Psoas muscle (tissue), 8 donors: ENCODE measurements at regions of chr12 and their contacts with region 1.

Region 1: GRCh38 chr12:48165094-48165981 is 8.0 kb upstream of the ASB8 start:
- DNase-seq: no peak
- ATAC-seq: peak; percentile 55 to 66 (median 58)
- H3K4me3 ChIP-seq: peak overlapping the region; percentile 8
- H3K27ac ChIP-seq: peak overlapping the region; percentile 88
- H3K4me1 ChIP-seq: peaks cover 31% of the 10 kb centered on the region
- H3K27me3 ChIP-seq: no peaks in the 10 kb centered on the region
- CTCF ChIP-seq: peak; percentile 94

Region 2: DNA sequence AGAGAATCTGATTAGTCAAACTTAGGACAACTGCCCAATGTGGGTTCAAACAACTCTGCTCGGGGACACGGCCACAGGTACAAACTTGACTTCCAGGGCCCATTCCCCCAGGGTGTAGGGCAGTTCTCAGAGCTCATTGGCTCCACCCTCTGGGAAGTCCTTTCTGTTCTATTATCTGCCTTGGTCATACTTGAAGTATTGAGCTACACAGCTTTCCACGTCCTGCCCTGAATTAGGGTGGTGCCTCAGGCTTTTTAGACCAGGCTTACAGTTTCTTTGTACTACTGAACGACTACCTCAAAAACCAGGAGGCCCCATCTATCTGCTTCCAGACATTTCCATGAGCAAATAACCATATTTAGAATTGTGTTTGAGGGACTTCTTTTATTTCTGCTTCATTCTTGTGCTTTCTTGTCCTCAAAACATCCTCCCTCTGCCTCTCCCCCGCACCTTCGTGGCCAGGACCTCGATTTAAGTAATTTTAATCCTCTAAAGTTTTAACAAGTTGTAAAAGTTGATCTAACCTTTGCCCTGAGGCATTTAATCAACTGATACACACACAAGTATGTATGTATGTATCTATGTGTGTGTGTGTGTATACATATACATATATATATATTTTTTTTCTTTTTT is 803.8 kb before region 1 on chr12:
- intact Hi-C with region 1: no loop called
- DNase-seq: no peak
- ATAC-seq: no peak
- H3K4me3 ChIP-seq: no peak overlapping the region
- H3K27ac ChIP-seq: peak overlapping the region; percentile 31
- H3K4me1 ChIP-seq: no peaks in the 10 kb centered on the region
- H3K27me3 ChIP-seq: no peaks in the 10 kb centered on the region
- CTCF ChIP-seq: no peak

Region 3: DNA sequence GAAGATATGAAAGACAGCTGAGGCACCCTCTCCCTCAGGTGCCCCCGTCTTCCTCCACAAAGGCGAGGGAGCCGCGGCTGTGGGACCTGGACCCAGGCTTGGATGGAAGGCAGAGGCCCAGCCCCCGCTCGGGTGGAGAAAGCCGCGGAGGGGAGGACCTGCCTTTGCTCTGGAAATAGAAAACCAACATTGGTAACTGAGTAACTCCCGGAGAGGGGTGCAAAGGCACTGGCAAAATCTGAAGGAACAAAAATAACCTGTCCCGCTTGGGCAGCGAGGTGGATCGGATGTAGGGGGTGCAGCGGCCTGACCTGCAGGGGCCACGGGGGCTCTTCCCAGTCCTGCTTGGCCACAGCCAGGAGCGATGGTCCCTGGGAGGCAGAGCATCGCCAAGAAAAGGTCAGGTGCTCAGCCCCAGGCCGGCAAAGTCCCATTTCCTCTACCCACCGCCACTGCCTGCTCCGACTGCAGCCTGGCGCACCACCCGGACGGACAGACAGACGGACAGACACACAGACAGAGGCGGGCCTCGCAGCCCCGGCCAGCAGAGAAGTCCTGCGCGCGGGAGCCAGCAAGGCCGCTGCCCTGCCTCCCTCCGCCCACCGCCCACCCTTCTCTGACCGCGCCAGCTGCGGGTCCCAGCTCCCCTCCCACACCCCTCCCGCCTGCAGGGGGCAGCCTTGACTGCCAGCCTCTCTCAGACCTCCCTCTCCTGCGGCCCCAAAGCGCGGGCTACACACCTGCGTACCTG is 223.3 kb before region 1 on chr12:
- intact Hi-C with region 1: loop called in 1 of 2 experiments (anchors 5 kb)
- DNase-seq: peak in 1 of 2 donors; percentile 58
- ATAC-seq: peak in 3 of 4 donors; percentile 44 to 59 (median 53)
- H3K4me3 ChIP-seq: no peak overlapping the region
- H3K27ac ChIP-seq: no peak overlapping the region
- H3K4me1 ChIP-seq: no peaks in the 10 kb centered on the region
- H3K27me3 ChIP-seq: peaks cover 0 to 16% (median 4%) of the 10 kb centered on the region in 3 donors
- CTCF ChIP-seq: no peak

Region 4: GRCh38 chr12:47954058-47954457 is 211.3 kb before region 1 on chr12:
- intact Hi-C with region 1: no loop called
- DNase-seq: no peak
- ATAC-seq: no peak
- H3K4me3 ChIP-seq: no peak overlapping the region
- H3K27ac ChIP-seq: no peak overlapping the region
- H3K4me1 ChIP-seq: no peaks in the 10 kb centered on the region
- H3K27me3 ChIP-seq: no peaks in the 10 kb centered on the region
- CTCF ChIP-seq: no peak

Region 5: DNA sequence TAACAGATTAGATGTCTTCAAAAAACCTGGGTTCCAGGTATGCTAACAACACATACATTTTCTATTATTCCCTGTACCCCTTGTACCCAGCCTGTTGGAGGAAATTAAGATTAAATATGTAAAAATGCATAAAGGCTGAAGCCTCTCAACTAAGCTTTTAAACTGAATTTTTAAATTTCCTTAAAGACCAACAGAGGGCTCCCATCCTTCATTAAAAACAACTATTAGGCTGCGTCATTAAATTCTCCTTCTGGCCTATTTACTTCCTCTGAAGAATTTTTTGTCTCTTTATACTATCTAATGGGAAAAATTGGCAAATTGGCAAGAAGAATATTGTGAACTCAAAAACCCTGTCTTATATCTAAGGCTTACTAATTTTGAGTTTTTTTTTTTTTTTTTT is 81.3 kb before region 1 on chr12:
- intact Hi-C with region 1: loop called (anchors 1 to 5 kb)
- DNase-seq: no peak
- ATAC-seq: peak in 2 of 4 donors; percentile 40 to 80
- H3K4me3 ChIP-seq: no peak overlapping the region
- H3K27ac ChIP-seq: no peak overlapping the region
- H3K4me1 ChIP-seq: no peaks in the 10 kb centered on the region
- H3K27me3 ChIP-seq: no peaks in the 10 kb centered on the region
- CTCF ChIP-seq: peak; percentile 30